ENCODE measurements at regions of chr13 and their contacts with region 1.

Region 1: DNA sequence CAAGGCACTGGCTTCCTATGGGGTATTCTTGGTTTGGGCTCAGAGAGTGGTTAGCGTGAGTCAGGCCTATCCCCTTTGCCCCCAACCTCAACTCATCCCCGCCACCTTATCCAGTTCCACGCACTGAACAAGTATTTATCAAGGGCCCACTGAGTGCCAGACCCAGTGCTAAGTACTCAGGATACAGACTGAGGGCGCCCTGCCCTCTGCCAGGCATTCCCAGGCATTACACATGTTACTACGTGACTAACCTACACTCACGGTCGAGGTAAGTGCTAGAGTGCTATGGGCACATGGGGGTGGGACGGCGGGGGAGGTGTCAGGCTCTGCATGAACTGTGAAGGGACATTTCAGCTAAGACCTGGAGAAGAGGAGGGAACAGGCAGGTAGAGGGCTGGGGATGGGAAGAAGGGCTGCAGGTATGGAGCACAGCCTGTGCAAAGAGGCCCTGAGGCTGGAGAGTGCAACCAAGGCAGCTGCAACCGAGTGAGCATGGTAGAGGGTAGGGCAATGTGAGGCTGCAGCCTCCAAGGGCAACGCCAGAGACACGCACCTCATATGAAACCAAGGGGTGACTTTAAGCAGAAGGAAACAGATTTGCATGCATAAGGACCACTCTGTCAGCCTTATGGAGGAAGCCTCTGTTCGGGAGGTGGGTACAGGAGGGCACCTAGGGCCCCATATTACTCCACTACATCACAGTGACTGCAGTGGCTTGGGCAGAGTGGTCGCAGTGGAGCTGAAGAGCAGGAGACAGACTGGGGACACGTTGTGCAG is 22.5 kb downstream of the DHRS12 start:
- DNase-seq: no peak
- H3K4me3 ChIP-seq: no peak overlapping the region
- H3K27ac ChIP-seq: no peak overlapping the region
- H3K4me1 ChIP-seq: peaks cover 0 to 4% (median 0%) of the 10 kb centered on the region in 4 experiments; a peak in 2 of 7 replicates
- H3K27me3 ChIP-seq: no peaks in the 10 kb centered on the region; a peak in 1 of 7 replicates
- CTCF ChIP-seq: peak; percentile 38 to 69 (median 56); a peak in 3 of 4 replicates
- EP300 ChIP-seq: no peak
- POLR2A ChIP-seq: no peak
- RAD21 ChIP-seq: peak; percentile 76 to 77

Region 2: GRCh38 chr13:51767100-51767499 is 14.3 kb before region 1 on chr13:
- CTCF ChIA-PET with region 1: interaction called, 14 read pairs
- POLR2A ChIA-PET with region 1: interaction called, 20 read pairs
- DNase-seq: no peak
- H3K4me3 ChIP-seq: no peak overlapping the region
- H3K27ac ChIP-seq: no peak overlapping the region
- H3K4me1 ChIP-seq: peaks cover 7 to 12% (median 9%) of the 10 kb centered on the region in 4 experiments
- H3K27me3 ChIP-seq: no peaks in the 10 kb centered on the region
- CTCF ChIP-seq: peak in 2 of 3 experiments; percentile 66 to 84; a peak in 3 of 4 replicates
- EP300 ChIP-seq: no peak
- POLR2A ChIP-seq: no peak
- RAD21 ChIP-seq: peak; percentile 75 to 77

Region 3: GRCh38 chr13:51911860-51912510 is 130.6 kb after region 1 on chr13:
- CTCF ChIA-PET with region 1: no interaction called
- POLR2A ChIA-PET with region 1: no interaction called
- DNase-seq: no peak
- H3K4me3 ChIP-seq: no peak overlapping the region
- H3K27ac ChIP-seq: no peak overlapping the region
- H3K4me1 ChIP-seq: no peaks in the 10 kb centered on the region; a peak in 2 of 7 replicates
- H3K27me3 ChIP-seq: no peaks in the 10 kb centered on the region
- CTCF ChIP-seq: no peak
- EP300 ChIP-seq: no peak
- POLR2A ChIP-seq: no peak
- RAD21 ChIP-seq: no peak

Measured in H1 (cell line).